ENCODE measurements at regions of chr5 and their contacts with region 1.

Region 1: DNA sequence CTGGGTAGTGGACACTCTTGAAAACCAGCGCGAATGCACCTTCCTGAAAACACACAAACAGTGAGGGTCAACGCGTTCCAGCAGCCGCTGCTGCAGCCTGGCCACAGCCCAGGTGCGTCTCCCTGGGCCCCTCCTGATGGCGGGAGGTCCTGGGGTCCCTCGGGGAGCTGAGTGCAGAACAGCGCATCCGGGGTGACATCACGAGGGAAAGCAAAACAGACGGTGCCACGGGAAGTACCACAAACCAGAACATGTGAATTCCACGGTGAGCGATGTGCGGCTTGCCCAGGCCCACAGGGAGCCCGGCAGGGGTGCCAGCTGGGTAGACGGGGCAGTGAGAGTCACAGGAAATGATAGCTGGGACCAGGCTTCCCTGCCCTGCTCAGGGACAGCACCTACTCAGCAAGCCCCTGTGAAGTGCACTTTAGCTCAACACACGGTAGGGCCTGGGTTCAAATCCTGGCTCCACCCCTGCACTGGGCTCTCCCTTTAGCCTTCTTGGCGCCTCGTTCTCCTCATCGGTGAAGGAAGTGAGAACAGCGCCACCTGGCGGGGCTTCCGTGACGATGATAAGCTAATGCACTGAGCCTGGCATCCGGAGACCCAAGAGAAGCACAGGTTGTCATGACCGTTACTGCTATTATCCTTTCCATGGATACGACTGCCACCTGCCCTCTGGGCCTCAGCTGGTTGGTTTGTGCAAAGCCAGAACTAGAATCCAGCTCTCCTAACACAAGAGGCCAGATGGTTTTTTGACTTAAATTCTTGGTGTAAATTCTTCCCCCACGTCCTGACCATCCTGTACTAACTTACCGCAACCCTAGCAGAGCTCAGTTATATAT is 24.6 kb downstream of the GFPT2 start:
- DNase-seq: no peak
- H3K4me3 ChIP-seq: no peak overlapping the region
- H3K27ac ChIP-seq: peak overlapping the region; percentile 21
- H3K27me3 ChIP-seq: no peaks in the 10 kb centered on the region
- CTCF ChIP-seq: peak; percentile 72

Region 2: DNA sequence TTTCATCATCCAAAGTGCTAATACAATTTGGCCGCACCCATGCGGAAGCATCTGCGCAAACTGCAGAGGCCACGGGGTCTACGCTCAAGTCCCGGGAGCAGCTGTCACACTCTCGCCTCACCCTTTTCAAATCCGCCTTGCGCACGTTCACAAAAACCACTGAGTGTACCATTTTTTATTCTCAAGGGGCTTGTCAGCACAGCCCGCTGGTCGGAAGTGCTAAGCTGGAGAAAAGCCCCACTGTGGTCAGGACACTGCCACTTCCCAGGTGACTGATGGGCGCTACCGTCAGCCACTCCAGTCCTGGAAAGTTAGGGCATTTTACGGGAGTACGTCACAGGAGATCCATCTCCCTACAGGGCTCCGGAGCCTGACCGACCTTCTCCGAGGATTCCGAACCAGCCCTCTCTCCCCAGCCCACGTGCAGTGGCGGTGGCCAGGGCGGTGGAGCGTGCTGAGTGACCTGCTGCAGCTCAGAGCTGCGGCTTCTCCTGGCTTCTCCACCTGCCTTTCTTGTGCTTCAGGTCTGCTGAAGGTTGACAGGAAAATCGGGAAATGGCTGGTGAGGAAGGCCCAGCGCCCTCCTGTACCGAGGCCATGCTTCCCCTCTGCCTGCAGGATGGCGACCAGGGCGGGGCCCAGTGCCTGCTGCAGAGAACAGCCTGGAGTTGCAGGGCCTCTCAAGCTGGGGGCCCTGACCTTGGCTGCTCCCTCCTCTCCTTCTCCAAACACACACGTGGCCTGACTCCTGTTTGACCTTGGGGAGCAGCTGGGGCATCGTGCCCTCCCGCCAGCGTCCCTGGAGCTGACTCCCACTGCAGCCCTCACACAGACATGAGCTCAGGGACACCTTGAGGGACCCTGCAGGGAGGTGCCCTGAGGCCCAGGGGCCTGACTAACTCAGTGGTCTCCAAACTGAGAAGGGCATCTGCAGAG is 133.8 kb before region 1 on chr5:
- CTCF ChIA-PET with region 1: no interaction called
- POLR2A ChIA-PET with region 1: no interaction called
- DNase-seq: no peak
- H3K4me3 ChIP-seq: no peak overlapping the region
- H3K27ac ChIP-seq: no peak overlapping the region
- H3K27me3 ChIP-seq: no peaks in the 10 kb centered on the region
- CTCF ChIP-seq: no peak

Region 3: GRCh38 chr5:180315762-180316212 is 12.7 kb before region 1 on chr5:
- CTCF ChIA-PET with region 1: interaction called, 30 read pairs
- POLR2A ChIA-PET with region 1: interaction called, 4 read pairs
- DNase-seq: no peak
- H3K4me3 ChIP-seq: no peak overlapping the region
- H3K27ac ChIP-seq: no peak overlapping the region
- H3K27me3 ChIP-seq: no peaks in the 10 kb centered on the region
- CTCF ChIP-seq: peak; percentile 96

Region 4: DNA sequence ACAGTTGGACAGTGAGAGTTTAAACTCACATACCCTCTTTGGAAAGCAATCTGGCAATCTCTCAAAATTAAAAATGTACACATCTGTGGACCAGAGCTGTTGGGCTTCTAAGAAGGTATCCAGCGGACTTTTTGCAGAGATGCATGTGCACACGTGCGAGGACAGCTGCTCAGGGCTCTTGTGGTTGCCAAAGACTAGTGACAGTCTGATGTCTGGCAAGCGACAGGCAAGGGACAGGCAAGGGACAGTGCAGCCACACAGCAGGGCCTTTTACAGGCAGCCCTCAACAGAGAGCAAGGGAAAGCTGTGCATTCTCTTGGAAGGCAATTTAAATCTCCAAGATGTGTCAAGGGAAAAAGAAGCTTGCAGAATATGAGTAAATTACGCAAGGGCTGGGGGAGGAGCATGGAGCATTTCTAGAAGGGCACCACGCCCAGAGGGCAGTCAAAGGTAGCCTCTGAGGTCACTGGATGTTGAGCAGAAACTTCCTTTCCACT is 15.4 kb after region 1 on chr5:
- CTCF ChIA-PET with region 1: interaction called, 25 read pairs
- POLR2A ChIA-PET with region 1: no interaction called
- DNase-seq: no peak
- H3K4me3 ChIP-seq: no peak overlapping the region
- H3K27ac ChIP-seq: peak overlapping the region; percentile 31
- H3K27me3 ChIP-seq: no peaks in the 10 kb centered on the region
- CTCF ChIP-seq: no peak

Region 5: GRCh38 chr5:180353048-180353979 is 24.8 kb after region 1 on chr5 and contains the start of gene GFPT2:
- CTCF ChIA-PET with region 1: interaction called, 8 read pairs
- POLR2A ChIA-PET with region 1: interaction called, 13 read pairs
- DNase-seq: peak; percentile 27
- H3K4me3 ChIP-seq: peak within 1 kb of the TSS; percentile 77
- H3K27ac ChIP-seq: no peak within 1 kb of the TSS
- H3K27me3 ChIP-seq: peaks cover 7% of the 10 kb centered on the region
- CTCF ChIP-seq: no peak
- polyA plus RNA-seq, gene GFPT2: 13.9 and 15.1 TPM in 2 replicates

Region 6: GRCh38 chr5:180470966-180471582 is 142.6 kb after region 1 on chr5:
- CTCF ChIA-PET with region 1: interaction called, 16 read pairs
- POLR2A ChIA-PET with region 1: no interaction called
- DNase-seq: peak; percentile 45
- H3K4me3 ChIP-seq: no peak overlapping the region
- H3K27ac ChIP-seq: no peak overlapping the region
- H3K27me3 ChIP-seq: peaks cover 15% of the 10 kb centered on the region
- CTCF ChIP-seq: peak; percentile 92

Measured in AG04450 (cell line).